IMR-90 (cell line): ENCODE measurements at regions of chr20 and their contacts with region 1.

Region 1: DNA sequence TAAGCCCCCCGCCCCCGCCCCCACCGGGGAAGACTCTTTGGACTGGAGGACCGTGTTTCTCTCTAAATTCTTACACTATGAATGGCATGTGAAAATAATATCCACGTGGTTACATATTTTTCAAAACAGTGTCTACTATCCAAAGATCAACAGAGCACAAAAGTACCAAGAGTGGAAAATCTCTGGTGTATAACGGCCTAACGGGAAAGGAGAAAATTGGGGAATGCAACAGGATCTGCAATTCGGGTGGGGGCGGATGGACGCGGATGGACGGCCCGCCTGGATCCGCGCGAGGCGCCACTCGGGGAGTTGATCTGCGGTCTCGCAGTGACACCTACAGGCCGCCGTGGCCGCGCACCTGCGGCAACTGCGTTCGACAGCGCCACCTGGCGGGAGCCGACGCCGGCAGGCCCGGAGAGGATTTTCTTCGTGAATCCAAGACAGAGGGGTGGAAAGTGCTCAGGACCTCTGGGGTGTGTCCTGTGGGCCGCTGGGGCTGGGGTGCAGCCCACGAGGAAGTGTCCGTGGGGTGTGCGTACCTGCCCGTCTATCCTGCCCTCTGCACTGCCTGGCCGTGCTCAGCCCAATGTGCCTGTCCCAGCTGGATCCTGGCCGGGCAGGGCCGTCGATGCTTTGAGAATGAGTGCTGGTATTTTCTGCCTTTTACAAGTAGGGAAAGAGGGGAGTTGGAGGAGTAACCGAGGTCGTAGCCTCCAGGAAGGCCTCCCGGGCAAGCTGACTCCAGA is 18.6 kb downstream of the ANKRD60 start:
- DNase-seq: peak; percentile 65
- ATAC-seq: peak; percentile 96
- H3K4me3 ChIP-seq: no peak overlapping the region
- H3K27ac ChIP-seq: no peak overlapping the region
- H3K4me1 ChIP-seq: no peaks in the 10 kb centered on the region
- H3K27me3 ChIP-seq: peaks cover 22% of the 10 kb centered on the region
- CTCF ChIP-seq: peak; percentile 100; the same call in 1 of the 2 replicates
- POLR2A ChIP-seq: 0 out of 2 replicates have a peak, but pooled peaks have one; percentile 50
- RAD21 ChIP-seq: peak; percentile 98

Region 2: GRCh38 chr20:57391074-57391554 is 818.7 kb before region 1 on chr20 and contains the start of gene RBM38:
- CTCF ChIA-PET with region 1: no interaction called
- POLR2A ChIA-PET with region 1: no interaction called
- dilution Hi-C with region 1: no loop called
- in situ Hi-C with region 1: loop called (anchors 10 kb)
- intact Hi-C with region 1: loop called (anchors 10 kb)
- DNase-seq: peak; percentile 49
- ATAC-seq: peak; percentile 96
- H3K4me3 ChIP-seq: peak within 1 kb of the TSS; percentile 99
- H3K27ac ChIP-seq: peak within 1 kb of the TSS; percentile 30; the same call in 1 of the 2 replicates
- H3K4me1 ChIP-seq: peaks cover 9% of the 10 kb centered on the region
- H3K27me3 ChIP-seq: no peaks in the 10 kb centered on the region
- CTCF ChIP-seq: no peak
- POLR2A ChIP-seq: no peak
- RAD21 ChIP-seq: no peak
- total RNA-seq, gene RBM38: 5.2 and 6.9 TPM in 2 replicates

Region 3: GRCh38 chr20:57514273-57514751 is 695.5 kb before region 1 on chr20:
- CTCF ChIA-PET with region 1: no interaction called
- POLR2A ChIA-PET with region 1: no interaction called
- dilution Hi-C with region 1: no loop called
- in situ Hi-C with region 1: loop called (anchors 5 kb)
- intact Hi-C with region 1: loop called (anchors 1 kb)
- DNase-seq: peak; percentile 64
- ATAC-seq: peak; percentile 97
- H3K4me3 ChIP-seq: no peak overlapping the region
- H3K27ac ChIP-seq: no peak overlapping the region
- H3K4me1 ChIP-seq: no peaks in the 10 kb centered on the region
- H3K27me3 ChIP-seq: peaks cover 11% of the 10 kb centered on the region
- CTCF ChIP-seq: peak; percentile 90
- POLR2A ChIP-seq: no peak
- RAD21 ChIP-seq: peak; percentile 90

Region 4: DNA sequence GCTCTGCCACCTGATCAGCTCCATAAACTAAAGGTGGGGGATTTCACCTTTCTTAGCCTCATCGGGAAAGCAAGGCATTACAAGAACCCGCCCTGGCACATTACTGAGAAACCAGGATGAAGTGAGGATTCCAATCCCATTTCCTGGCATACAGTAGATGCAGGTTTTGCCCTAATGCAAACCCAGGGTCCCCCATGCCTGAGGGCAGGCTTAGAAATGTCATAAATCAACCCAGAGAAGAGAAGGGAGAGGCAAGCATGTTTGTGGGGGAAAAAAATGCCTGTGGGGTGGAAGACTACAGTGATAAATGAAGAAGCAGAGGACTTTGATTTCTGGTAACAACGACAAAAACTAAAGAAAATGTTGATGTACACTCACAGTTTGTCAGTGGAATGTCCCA is 482.0 kb before region 1 on chr20:
- CTCF ChIA-PET with region 1: no interaction called
- POLR2A ChIA-PET with region 1: no interaction called
- dilution Hi-C with region 1: no loop called
- in situ Hi-C with region 1: no loop called
- intact Hi-C with region 1: no loop called
- DNase-seq: no peak
- ATAC-seq: no peak
- H3K4me3 ChIP-seq: no peak overlapping the region
- H3K27ac ChIP-seq: no peak overlapping the region
- H3K4me1 ChIP-seq: no peaks in the 10 kb centered on the region
- H3K27me3 ChIP-seq: peaks cover 67% of the 10 kb centered on the region
- CTCF ChIP-seq: no peak
- POLR2A ChIP-seq: no peak
- RAD21 ChIP-seq: no peak

Region 5: DNA sequence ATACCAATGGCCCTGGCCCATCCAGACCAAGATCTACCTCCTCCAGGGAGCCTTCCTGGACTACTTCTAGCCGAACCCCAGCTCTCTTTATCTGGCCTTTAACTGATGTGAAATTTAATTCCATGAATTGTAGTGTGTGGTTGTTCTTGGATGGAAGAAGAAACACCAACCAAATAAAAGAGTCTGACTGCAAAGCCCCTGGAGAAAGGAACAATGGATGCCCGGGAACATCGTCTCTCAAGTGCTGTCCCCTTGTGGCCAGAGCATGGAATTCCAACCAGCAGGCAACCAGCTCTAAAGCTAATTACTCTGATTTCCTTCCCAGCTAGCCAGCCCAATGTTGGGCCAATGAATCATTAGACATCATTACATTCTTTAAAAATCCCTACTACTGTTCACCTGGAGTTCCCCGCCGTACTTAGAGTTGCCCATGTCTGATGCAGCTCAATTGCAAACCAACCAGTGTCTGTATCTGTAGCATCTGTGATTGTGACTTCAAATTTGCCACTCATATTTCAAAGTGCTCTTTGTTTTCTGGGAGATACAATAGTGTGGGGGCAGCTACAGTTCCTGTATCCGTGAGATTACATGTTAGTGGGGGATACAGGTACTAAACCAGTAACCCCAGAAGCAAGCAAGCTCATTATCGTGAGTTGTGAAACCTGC is 122.5 kb before region 1 on chr20:
- CTCF ChIA-PET with region 1: no interaction called
- POLR2A ChIA-PET with region 1: no interaction called
- dilution Hi-C with region 1: no loop called
- in situ Hi-C with region 1: no loop called
- intact Hi-C with region 1: loop called (anchors 1 kb)
- DNase-seq: peak; percentile 27
- ATAC-seq: peak; percentile 72
- H3K4me3 ChIP-seq: no peak overlapping the region
- H3K27ac ChIP-seq: no peak overlapping the region
- H3K4me1 ChIP-seq: no peaks in the 10 kb centered on the region
- H3K27me3 ChIP-seq: no peaks in the 10 kb centered on the region; the same call in 1 of the 2 replicates
- CTCF ChIP-seq: peak; percentile 73
- POLR2A ChIP-seq: no peak
- RAD21 ChIP-seq: peak; percentile 70